CD4-positive, alpha-beta T cell (primary cell): ENCODE measurements at regions of chr9 and their contacts with region 1.

Region 1: GRCh38 chr9:92954049-92954861 is 6.9 kb downstream of the FGD3 start:
- DNase-seq: peak; percentile 61 to 95 (median 80)
- ATAC-seq: peak; percentile 90
- H3K4me3 ChIP-seq: peak overlapping the region; percentile 55
- H3K4me3 Mint-ChIP-seq: peak overlapping the region; percentile 92
- H3K27ac ChIP-seq: peak overlapping the region; percentile 67 to 90
- H3K27ac Mint-ChIP-seq: peak overlapping the region; percentile 98
- H3K4me1 ChIP-seq: peaks cover 91% of the 10 kb centered on the region
- H3K4me1 Mint-ChIP-seq: peaks cover 89% of the 10 kb centered on the region
- H3K27me3 ChIP-seq: no peaks in the 10 kb centered on the region
- H3K27me3 Mint-ChIP-seq: no peaks in the 10 kb centered on the region
- CTCF ChIP-seq: no peak

Region 2: DNA sequence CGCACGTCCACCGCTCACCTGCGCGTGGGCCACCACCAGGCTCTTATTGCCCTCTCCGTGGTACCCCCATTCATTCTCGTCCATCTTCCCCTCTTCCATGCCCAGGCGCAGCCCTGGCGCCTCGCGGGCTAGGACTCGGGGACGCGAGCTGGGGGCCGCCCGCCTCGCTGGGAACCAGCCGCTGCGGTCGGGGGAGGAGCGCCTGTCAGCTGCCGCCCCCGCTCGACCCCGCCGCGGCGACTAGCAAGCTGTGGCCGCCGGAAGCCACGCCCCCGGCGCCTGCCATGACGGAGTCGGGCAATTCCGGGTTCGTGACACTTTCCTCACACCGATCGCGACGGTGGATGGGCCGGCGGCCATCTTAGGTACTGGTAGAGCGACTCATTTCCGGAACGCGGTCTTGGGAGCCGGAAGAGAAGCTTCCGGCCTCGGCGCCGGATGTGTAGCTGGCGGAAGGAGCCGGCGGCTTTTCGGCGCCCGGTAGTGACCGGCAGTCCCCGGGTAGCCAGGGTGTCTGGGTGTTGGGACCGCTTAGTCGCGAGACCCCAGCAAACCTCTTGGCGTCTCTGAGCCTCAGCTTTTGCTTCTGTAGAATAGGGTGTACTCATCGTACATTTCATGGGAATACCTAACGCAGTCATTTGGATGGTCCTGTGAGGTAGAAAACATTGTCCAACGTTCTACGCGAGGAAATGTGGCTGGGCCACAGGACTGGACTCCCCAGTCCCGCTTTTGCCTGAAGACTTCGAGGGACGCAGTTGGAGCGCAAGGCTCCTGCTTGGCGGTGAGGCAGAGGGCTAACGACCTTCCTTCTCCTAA is 284.2 kb before region 1 on chr9 and contains the start of gene IPPK:
- CTCF ChIA-PET with region 1: no interaction called
- POLR2A ChIA-PET with region 1: interaction called, 13 read pairs
- intact Hi-C with region 1: no loop called
- DNase-seq: peak; percentile 92 to 99 (median 95)
- ATAC-seq: peak; percentile 94
- H3K4me3 ChIP-seq: peak within 1 kb of the TSS; percentile 100
- H3K4me3 Mint-ChIP-seq: peak within 1 kb of the TSS; percentile 98
- H3K27ac ChIP-seq: peak within 1 kb of the TSS; percentile 88 to 96
- H3K27ac Mint-ChIP-seq: peak within 1 kb of the TSS; percentile 99
- H3K4me1 ChIP-seq: peaks cover 37% of the 10 kb centered on the region
- H3K4me1 Mint-ChIP-seq: peaks cover 45% of the 10 kb centered on the region
- H3K27me3 ChIP-seq: no peaks in the 10 kb centered on the region
- H3K27me3 Mint-ChIP-seq: no peaks in the 10 kb centered on the region
- CTCF ChIP-seq: no peak
- total RNA-seq, gene IPPK: 4.0 to 4.4 TPM

Region 3: DNA sequence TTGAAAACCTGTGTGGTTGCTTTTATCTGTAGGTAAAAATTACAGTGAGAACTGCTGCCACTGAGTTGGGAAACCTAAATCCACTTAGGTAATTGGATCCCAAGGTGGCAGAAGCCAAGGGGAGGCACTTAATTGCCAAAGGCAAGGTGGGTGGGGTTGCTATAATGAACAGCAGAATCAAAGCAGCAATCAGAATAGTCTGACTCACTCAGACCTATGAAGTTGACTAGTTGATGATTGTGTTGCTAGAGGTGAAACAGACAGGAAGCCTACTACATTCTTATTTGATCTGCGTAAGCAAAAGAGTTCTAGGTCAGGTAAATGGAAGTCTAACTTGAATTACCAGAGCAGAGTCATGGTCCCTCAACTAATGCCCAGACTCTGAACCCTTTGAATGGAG is 172.3 kb before region 1 on chr9:
- CTCF ChIA-PET with region 1: no interaction called
- POLR2A ChIA-PET with region 1: no interaction called
- intact Hi-C with region 1: no loop called
- DNase-seq: peak in 2 of 14 experiments; percentile 13 to 18
- ATAC-seq: peak; percentile 93
- H3K4me3 ChIP-seq: no peak overlapping the region
- H3K4me3 Mint-ChIP-seq: no peak overlapping the region
- H3K27ac ChIP-seq: no peak overlapping the region
- H3K27ac Mint-ChIP-seq: peak overlapping the region; percentile 34
- H3K4me1 ChIP-seq: no peaks in the 10 kb centered on the region
- H3K4me1 Mint-ChIP-seq: peaks cover 8% of the 10 kb centered on the region
- H3K27me3 ChIP-seq: no peaks in the 10 kb centered on the region
- H3K27me3 Mint-ChIP-seq: peaks cover 4% of the 10 kb centered on the region
- CTCF ChIP-seq: no peak

Region 4: GRCh38 chr9:92887880-92888338 is 66.3 kb before region 1 on chr9:
- CTCF ChIA-PET with region 1: no interaction called
- POLR2A ChIA-PET with region 1: interaction called, 12 read pairs
- intact Hi-C with region 1: loop called (anchors 5 kb)
- DNase-seq: peak in 8 of 14 experiments; percentile 11 to 70 (median 38)
- ATAC-seq: peak; percentile 66
- H3K4me3 ChIP-seq: no peak overlapping the region
- H3K4me3 Mint-ChIP-seq: peak overlapping the region; percentile 77
- H3K27ac ChIP-seq: no peak overlapping the region
- H3K27ac Mint-ChIP-seq: peak overlapping the region; percentile 86
- H3K4me1 ChIP-seq: peaks cover 36% of the 10 kb centered on the region
- H3K4me1 Mint-ChIP-seq: peaks cover 86% of the 10 kb centered on the region
- H3K27me3 ChIP-seq: no peaks in the 10 kb centered on the region
- H3K27me3 Mint-ChIP-seq: no peaks in the 10 kb centered on the region
- CTCF ChIP-seq: no peak

Region 5: DNA sequence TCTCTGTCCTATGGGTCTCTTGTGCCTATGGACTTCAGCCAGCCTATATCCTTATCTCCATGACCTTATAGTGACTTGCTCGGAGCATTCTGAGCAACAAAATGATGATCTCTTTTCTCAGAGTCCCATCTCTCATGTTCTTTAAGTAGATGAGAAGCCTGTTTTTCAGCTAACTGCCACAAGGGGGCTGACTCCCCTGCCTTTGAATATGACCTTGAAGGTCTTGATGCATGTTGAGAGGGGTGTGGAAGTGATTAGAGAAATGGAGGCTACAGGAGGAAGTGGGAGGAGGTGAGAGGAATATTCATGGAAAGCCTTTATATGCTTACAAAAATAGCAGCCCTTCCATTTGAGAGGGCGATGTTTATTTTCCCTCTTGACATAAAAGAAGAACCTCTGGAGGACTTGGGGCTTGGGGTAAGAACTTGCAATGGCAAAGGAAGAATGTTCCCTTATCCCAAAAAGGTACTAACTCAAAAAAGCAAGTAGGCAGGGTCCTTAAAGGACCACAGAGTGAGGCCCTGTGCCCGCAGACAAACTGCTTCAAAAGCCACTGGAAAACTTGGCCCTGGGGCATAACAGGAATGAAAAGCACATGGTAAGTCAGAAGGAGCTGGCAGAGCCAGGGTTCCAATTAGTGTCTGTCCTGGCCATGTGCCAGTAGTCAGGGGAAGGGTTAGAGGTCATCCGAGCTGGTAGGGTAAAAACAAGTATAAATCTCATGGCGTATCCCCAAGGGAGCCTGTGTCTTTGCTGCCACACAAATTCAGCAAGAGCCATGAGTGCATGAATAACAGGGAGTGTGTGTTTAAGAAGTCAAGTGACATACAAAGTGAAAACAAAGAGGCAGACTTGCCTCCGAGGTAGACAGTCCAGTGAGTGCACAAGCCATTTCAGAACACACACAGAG is 32.2 kb after region 1 on chr9:
- CTCF ChIA-PET with region 1: interaction called, 7 read pairs
- POLR2A ChIA-PET with region 1: interaction called, 5 read pairs
- intact Hi-C with region 1: loop called (anchors 2 kb)
- DNase-seq: peak in 12 of 14 experiments; percentile 37 to 80 (median 58)
- ATAC-seq: peak; percentile 67
- H3K4me3 ChIP-seq: no peak overlapping the region
- H3K4me3 Mint-ChIP-seq: peak overlapping the region; percentile 59
- H3K27ac ChIP-seq: peak overlapping the region; percentile 33 to 61
- H3K27ac Mint-ChIP-seq: peak overlapping the region; percentile 75
- H3K4me1 ChIP-seq: peaks cover 59% of the 10 kb centered on the region
- H3K4me1 Mint-ChIP-seq: peaks cover 82% of the 10 kb centered on the region
- H3K27me3 ChIP-seq: no peaks in the 10 kb centered on the region
- H3K27me3 Mint-ChIP-seq: no peaks in the 10 kb centered on the region
- CTCF ChIP-seq: peak; percentile 79

Region 6: GRCh38 chr9:93064392-93065134 is 110.3 kb after region 1 on chr9:
- CTCF ChIA-PET with region 1: interaction called, 4 read pairs
- POLR2A ChIA-PET with region 1: interaction called, 27 read pairs
- intact Hi-C with region 1: no loop called
- DNase-seq: peak; percentile 74 to 97 (median 86)
- ATAC-seq: peak; percentile 87
- H3K4me3 ChIP-seq: peak overlapping the region; percentile 45
- H3K4me3 Mint-ChIP-seq: peak overlapping the region; percentile 91
- H3K27ac ChIP-seq: peak overlapping the region; percentile 83 to 90
- H3K27ac Mint-ChIP-seq: peak overlapping the region; percentile 100
- H3K4me1 ChIP-seq: peaks cover 80% of the 10 kb centered on the region
- H3K4me1 Mint-ChIP-seq: peaks cover 96% of the 10 kb centered on the region
- H3K27me3 ChIP-seq: no peaks in the 10 kb centered on the region
- H3K27me3 Mint-ChIP-seq: no peaks in the 10 kb centered on the region
- CTCF ChIP-seq: no peak

Region 7: DNA sequence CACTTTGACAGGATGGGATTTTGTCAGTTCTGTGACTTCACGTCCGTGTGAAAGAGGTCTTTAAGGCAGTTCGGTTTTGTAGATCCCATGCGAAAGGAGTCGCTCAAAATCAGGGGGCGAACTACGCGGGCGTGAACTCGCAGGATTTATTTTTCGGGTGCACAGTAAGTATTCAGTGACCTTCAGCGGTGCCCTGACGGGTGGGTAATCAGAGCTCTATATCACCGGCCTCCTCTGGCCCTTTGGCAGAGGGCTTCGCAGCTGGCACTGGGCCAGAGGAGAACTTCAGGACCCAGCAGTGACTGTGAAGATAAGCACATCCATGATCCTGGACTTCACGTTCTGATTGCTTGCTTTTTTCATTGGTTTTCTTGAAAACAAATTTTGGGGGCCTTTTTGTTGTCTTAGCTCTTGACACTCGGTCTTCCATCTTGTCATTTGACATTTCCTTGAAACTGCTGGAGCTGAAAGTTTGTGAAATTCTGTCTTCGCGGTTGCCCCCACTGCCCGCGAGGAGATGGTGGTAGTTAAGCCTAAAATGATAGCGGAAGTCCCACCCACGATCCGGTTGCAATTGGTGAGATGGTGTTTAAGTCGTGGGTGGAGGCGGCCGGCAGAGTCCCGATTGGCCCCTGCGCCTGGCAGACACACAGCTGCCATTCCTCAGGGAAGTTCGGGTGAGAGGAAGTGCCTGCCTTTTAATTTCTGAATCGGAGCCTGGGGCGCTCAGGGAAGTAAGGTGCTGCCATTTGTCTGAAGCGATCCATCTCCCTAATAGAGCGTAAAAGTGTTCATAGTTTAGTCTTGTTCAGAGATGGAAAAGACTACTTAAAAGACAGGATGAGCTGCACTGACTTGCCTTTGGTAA is 499.0 kb after region 1 on chr9 and contains the start of gene FAM120AOS:
- CTCF ChIA-PET with region 1: no interaction called
- POLR2A ChIA-PET with region 1: interaction called, 4 read pairs
- intact Hi-C with region 1: loop called in 1 of 2 experiments (anchors 5 kb)
- DNase-seq: peak; percentile 65 to 93 (median 76)
- ATAC-seq: peak; percentile 71
- H3K4me3 ChIP-seq: peak within 1 kb of the TSS; percentile 90
- H3K4me3 Mint-ChIP-seq: peak within 1 kb of the TSS; percentile 98
- H3K27ac ChIP-seq: peak within 1 kb of the TSS; percentile 67 to 81
- H3K27ac Mint-ChIP-seq: peak within 1 kb of the TSS; percentile 94
- H3K4me1 ChIP-seq: peaks cover 29% of the 10 kb centered on the region
- H3K4me1 Mint-ChIP-seq: peaks cover 64% of the 10 kb centered on the region
- H3K27me3 ChIP-seq: no peaks in the 10 kb centered on the region
- H3K27me3 Mint-ChIP-seq: no peaks in the 10 kb centered on the region
- CTCF ChIP-seq: no peak
- total RNA-seq, gene FAM120AOS: 45.6 to 50.3 TPM